ENCODE measurements at regions of chr2 and their contacts with region 1.

Region 1: DNA sequence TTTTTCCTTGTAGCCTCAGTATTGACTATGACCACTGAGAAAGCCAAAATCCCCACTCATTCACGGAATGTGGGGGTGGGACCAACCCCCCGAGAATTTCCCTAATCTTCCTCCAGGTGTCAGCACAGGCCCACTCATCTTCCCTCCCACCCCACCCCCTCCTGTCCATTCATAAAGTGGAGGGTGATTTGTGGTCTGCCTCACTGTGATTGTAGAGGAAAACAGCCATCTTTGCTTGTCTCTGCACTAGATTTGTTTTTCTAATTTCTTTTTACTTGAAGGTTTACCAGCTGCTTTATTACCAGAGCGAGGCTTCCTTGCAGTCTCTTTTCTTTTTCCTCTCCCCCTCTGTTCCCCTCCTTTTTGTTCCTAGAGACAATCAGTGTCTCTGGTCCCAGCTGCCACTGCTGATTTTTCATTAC is 171.8 kb downstream of the ICOS start:
- DNase-seq: peak in 8 of 9 donors; percentile 40 to 70 (median 56)
- ATAC-seq: peak; percentile 74
- H3K4me3 ChIP-seq: peak overlapping the region; percentile 21
- H3K4me3 Mint-ChIP-seq: peak overlapping the region in 9 of 10 donors; percentile 81 to 88 (median 83)
- H3K27ac ChIP-seq: no peak overlapping the region
- H3K27ac Mint-ChIP-seq: peak overlapping the region in 7 of 9 donors; percentile 7 to 96 (median 48)
- H3K4me1 ChIP-seq: peaks cover 30 to 31% of the 10 kb centered on the region in 2 donors
- H3K4me1 Mint-ChIP-seq: peaks cover 31 to 75% (median 48%) of the 10 kb centered on the region in 7 donors
- H3K27me3 ChIP-seq: no peaks in the 10 kb centered on the region
- H3K27me3 Mint-ChIP-seq: peaks cover 0 to 12% (median 0%) of the 10 kb centered on the region in 5 donors

Region 2: GRCh38 chr2:203578759-203579643 is 529.3 kb before region 1 on chr2:
- CTCF ChIA-PET with region 1: no interaction called
- POLR2A ChIA-PET with region 1: no interaction called
- intact Hi-C with region 1: loop called in 1 of 2 experiments (anchors 10 kb)
- DNase-seq: peak in 1 of 9 donors; percentile 47
- ATAC-seq: no peak
- H3K4me3 ChIP-seq: no peak overlapping the region
- H3K4me3 Mint-ChIP-seq: peak overlapping the region in 1 of 10 donors; percentile 63
- H3K27ac ChIP-seq: no peak overlapping the region
- H3K27ac Mint-ChIP-seq: peak overlapping the region in 2 of 9 donors; percentile 8 to 47
- H3K4me1 ChIP-seq: peaks cover 0 to 2% of the 10 kb centered on the region in 2 donors
- H3K4me1 Mint-ChIP-seq: peaks cover 0 to 44% (median 0%) of the 10 kb centered on the region in 7 donors
- H3K27me3 ChIP-seq: no peaks in the 10 kb centered on the region
- H3K27me3 Mint-ChIP-seq: peaks cover 0 to 64% (median 0%) of the 10 kb centered on the region in 5 donors

Region 3: DNA sequence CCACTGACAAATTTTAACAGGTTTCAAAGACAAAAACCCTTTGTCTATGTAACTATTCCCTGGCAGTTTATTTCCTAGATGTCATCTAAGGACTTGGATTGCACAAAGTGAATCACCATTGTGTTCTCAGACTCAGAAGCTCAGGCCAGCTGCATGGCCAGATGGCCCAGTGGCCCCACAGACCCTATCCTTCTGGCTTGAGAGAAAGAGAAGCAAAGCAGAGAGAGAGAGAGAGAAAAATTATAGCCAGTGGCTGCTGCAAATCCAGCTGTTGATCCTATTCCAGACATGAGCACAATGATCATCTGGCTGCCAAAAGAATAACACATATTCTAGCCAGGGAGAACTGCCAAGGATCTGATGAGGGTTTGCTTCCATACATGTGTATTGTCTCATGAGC is 214.9 kb before region 1 on chr2:
- CTCF ChIA-PET with region 1: no interaction called
- POLR2A ChIA-PET with region 1: no interaction called
- intact Hi-C with region 1: no loop called
- DNase-seq: no peak
- ATAC-seq: no peak
- H3K4me3 ChIP-seq: no peak overlapping the region
- H3K4me3 Mint-ChIP-seq: no peak overlapping the region
- H3K27ac ChIP-seq: no peak overlapping the region
- H3K27ac Mint-ChIP-seq: peak overlapping the region in 1 of 9 donors; percentile 77
- H3K4me1 ChIP-seq: no peaks in the 10 kb centered on the region
- H3K4me1 Mint-ChIP-seq: peaks cover 0 to 66% (median 7%) of the 10 kb centered on the region in 7 donors
- H3K27me3 ChIP-seq: no peaks in the 10 kb centered on the region
- H3K27me3 Mint-ChIP-seq: peaks cover 0 to 6% (median 0%) of the 10 kb centered on the region in 5 donors

Region 4: DNA sequence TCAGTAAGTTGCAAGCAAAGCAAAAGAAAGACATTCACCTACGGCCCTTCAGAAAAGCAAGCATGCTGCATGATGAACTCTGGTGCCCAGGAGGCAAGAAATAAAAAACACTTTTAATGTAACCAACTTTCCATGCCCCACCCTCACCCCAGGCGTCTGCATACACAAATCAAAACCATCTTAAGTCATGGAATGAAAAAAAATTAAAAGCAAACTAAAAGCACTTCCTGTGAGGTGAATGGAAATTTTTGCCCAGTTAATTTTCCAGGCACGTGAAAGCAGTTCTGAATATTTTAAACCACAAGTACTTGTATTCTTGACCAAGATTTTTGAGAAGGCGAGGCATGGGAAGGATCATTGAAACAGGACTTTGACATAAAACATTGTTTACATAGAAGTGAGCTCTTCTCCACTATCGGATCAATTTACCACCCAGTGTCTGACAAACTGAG is 174.3 kb before region 1 on chr2:
- CTCF ChIA-PET with region 1: interaction called, 5 read pairs
- POLR2A ChIA-PET with region 1: no interaction called
- intact Hi-C with region 1: loop called (anchors 2 kb)
- DNase-seq: peak in 8 of 9 donors; percentile 37 to 80 (median 60)
- ATAC-seq: peak; percentile 31
- H3K4me3 ChIP-seq: peak overlapping the region; percentile 22
- H3K4me3 Mint-ChIP-seq: peak overlapping the region; percentile 69 to 92 (median 78)
- H3K27ac ChIP-seq: peak overlapping the region; percentile 71
- H3K27ac Mint-ChIP-seq: peak overlapping the region; percentile 87 to 97 (median 93)
- H3K4me1 ChIP-seq: peaks cover 40 to 42% of the 10 kb centered on the region in 2 donors
- H3K4me1 Mint-ChIP-seq: peaks cover 33 to 68% (median 55%) of the 10 kb centered on the region in 7 donors
- H3K27me3 ChIP-seq: no peaks in the 10 kb centered on the region
- H3K27me3 Mint-ChIP-seq: no peaks in the 10 kb centered on the region

Region 5: GRCh38 chr2:204145263-204145751 is 37.0 kb after region 1 on chr2:
- CTCF ChIA-PET with region 1: interaction called, 4 read pairs
- POLR2A ChIA-PET with region 1: no interaction called
- intact Hi-C with region 1: loop called (anchors 1 kb)
- DNase-seq: peak; percentile 50 to 82 (median 76)
- ATAC-seq: peak; percentile 98
- H3K4me3 ChIP-seq: peak overlapping the region; percentile 61
- H3K4me3 Mint-ChIP-seq: peak overlapping the region; percentile 82 to 92 (median 86)
- H3K27ac ChIP-seq: peak overlapping the region; percentile 29
- H3K27ac Mint-ChIP-seq: peak overlapping the region; percentile 22 to 83 (median 56)
- H3K4me1 ChIP-seq: peaks cover 0 to 4% of the 10 kb centered on the region in 2 donors
- H3K4me1 Mint-ChIP-seq: peaks cover 3 to 11% (median 10%) of the 10 kb centered on the region in 7 donors
- H3K27me3 ChIP-seq: no peaks in the 10 kb centered on the region
- H3K27me3 Mint-ChIP-seq: peaks cover 0 to 43% (median 15%) of the 10 kb centered on the region in 5 donors

Region 6: GRCh38 chr2:204325468-204325867 is 217.1 kb after region 1 on chr2:
- CTCF ChIA-PET with region 1: no interaction called
- POLR2A ChIA-PET with region 1: no interaction called
- intact Hi-C with region 1: loop called (anchors 1 kb)
- DNase-seq: peak; percentile 18 to 80 (median 71)
- ATAC-seq: peak; percentile 83
- H3K4me3 ChIP-seq: no peak overlapping the region
- H3K4me3 Mint-ChIP-seq: peak overlapping the region in 1 of 10 donors; percentile 36
- H3K27ac ChIP-seq: no peak overlapping the region
- H3K27ac Mint-ChIP-seq: peak overlapping the region in 1 of 9 donors; percentile 15
- H3K4me1 ChIP-seq: no peaks in the 10 kb centered on the region
- H3K4me1 Mint-ChIP-seq: peaks cover 0 to 14% (median 4%) of the 10 kb centered on the region in 7 donors
- H3K27me3 ChIP-seq: no peaks in the 10 kb centered on the region
- H3K27me3 Mint-ChIP-seq: peaks cover 5 to 12% (median 7%) of the 10 kb centered on the region in 5 donors

Region 7: DNA sequence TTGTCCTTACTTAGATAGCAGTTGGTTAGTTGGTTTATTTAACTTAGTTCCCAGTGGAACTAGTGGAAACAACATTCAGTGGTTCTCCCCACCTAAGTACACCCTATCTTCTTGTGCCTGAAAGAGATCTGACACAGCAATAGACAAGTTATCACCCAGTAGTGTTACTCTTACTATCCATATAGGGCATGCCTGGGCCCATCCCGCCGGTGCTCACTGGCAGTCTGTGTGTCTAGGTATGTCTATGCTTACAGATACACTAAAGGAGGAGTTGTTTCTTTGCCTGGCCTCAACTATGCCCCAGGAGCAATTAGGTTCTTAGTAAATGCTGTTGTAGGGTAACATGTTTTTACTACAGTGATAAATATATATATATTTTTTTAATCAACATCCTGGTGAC is 1562.0 kb after region 1 on chr2:
- CTCF ChIA-PET with region 1: interaction called, 3 read pairs
- POLR2A ChIA-PET with region 1: no interaction called
- intact Hi-C with region 1: loop called in 1 of 2 experiments (anchors 5 kb)
- DNase-seq: no peak
- ATAC-seq: no peak
- H3K4me3 ChIP-seq: no peak overlapping the region
- H3K4me3 Mint-ChIP-seq: no peak overlapping the region
- H3K27ac ChIP-seq: no peak overlapping the region
- H3K27ac Mint-ChIP-seq: no peak overlapping the region
- H3K4me1 ChIP-seq: no peaks in the 10 kb centered on the region
- H3K4me1 Mint-ChIP-seq: peaks cover 0 to 11% (median 0%) of the 10 kb centered on the region in 7 donors
- H3K27me3 ChIP-seq: no peaks in the 10 kb centered on the region
- H3K27me3 Mint-ChIP-seq: peaks cover 0 to 10% (median 4%) of the 10 kb centered on the region in 5 donors

Region 8: DNA sequence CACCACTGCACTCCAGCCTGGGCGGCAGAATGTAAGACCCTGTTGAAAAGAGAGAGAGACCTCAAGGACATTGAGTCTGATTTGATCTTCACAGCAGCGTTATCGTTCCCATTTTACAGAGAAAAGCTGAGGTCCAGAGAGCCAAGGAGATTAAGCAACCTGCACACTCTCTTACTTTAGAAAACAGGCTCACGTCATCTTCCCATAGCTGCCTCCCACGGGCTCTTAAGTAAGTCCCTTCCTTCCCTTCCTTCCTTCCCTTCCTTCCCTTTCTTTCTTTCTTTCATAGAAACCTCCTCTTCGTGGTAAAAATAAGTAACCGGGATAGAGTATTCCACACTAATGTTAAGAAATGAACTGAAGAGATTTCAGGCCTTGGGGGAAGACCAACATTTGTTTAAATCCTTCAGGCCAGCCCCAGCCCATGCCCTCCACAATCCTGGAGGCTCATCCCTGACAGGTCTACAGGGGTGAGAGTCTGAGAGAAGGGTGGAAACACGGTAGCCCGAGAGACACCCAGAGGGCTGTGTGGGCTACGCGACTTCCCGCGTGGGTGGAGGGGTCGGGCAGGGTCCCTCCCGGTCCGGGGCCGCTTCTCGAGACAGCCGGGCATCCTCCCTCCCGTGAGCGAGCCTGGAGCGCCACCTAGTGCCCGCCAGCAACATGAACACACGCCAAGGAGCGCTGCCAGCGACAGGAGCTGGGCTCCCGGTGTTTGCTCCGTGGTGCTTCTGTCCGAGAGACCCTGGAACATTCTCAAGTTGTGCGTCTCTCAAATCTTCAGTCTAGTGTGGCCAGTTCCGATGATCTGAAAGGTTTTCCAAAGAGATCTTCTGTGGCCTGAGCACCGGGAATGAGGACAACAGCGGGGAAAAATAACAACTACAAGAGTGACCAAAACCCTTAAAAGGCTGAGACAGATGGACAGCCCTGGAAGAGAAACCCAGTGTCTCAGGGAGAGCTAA is 1817.3 kb after region 1 on chr2:
- CTCF ChIA-PET with region 1: interaction called, 4 read pairs
- POLR2A ChIA-PET with region 1: no interaction called
- intact Hi-C with region 1: loop called (anchors 2 to 10 kb)
- DNase-seq: peak; percentile 23 to 79 (median 61)
- ATAC-seq: peak; percentile 81
- H3K4me3 ChIP-seq: no peak overlapping the region
- H3K4me3 Mint-ChIP-seq: peak overlapping the region in 6 of 10 donors; percentile 9 to 62 (median 60)
- H3K27ac ChIP-seq: no peak overlapping the region
- H3K27ac Mint-ChIP-seq: peak overlapping the region in 1 of 9 donors; percentile 21
- H3K4me1 ChIP-seq: peaks cover 0 to 5% of the 10 kb centered on the region in 2 donors
- H3K4me1 Mint-ChIP-seq: peaks cover 5 to 13% (median 9%) of the 10 kb centered on the region in 7 donors
- H3K27me3 ChIP-seq: peaks cover 0 to 4% of the 10 kb centered on the region in 2 donors
- H3K27me3 Mint-ChIP-seq: peaks cover 40 to 58% (median 50%) of the 10 kb centered on the region in 5 donors

Measured in naive thymus-derived CD4-positive, alpha-beta T cell (primary cell).